ENCODE measurements at regions of chr2 and their contacts with region 1.

Region 1: DNA sequence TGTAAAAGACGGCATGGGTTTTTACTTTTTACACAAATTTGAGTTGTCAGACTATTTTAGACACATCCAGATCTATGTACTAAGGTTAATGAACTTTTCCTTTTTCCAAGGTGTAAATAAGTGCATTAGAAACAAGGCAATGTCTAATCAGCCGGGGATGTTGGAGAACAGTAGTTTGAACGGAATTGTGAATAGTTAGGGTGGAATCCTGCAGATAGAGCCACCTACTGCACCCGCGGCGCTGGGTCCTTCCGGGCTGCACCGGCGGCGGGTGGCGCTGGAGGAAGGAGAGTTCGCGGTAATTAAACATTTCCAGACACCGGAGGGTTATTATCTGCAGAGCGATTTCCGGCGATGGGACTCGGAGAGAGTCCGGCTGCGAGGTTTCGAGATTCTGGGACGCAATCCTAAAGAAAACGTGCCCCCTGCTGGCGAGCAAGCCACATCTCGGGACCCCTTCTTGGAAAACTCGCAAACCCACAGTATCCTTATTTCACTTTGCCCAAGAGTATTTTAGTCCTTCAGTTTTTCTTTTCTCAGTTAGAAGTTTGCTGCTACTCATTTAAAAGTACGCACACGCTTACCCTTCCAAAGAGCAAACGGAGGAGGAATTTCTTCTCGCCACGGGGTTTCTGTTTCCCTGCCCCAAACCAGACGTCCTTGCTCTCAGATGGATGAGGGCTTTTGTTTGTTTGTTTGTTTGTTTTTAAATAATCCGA is 4.5 kb upstream of the OSR1 start:
- DNase-seq: peak; percentile 77 to 84
- H3K4me3 ChIP-seq: peak overlapping the region; percentile 36
- H3K4me3 Mint-ChIP-seq: peak overlapping the region; percentile 82
- H3K27ac Mint-ChIP-seq: no peak overlapping the region
- H3K4me1 ChIP-seq: no peaks in the 10 kb centered on the region; the same call in 1 of the 2 replicates
- H3K4me1 Mint-ChIP-seq: peaks cover 19% of the 10 kb centered on the region
- H3K27me3 ChIP-seq: no peaks in the 10 kb centered on the region
- H3K27me3 Mint-ChIP-seq: peaks cover 15% of the 10 kb centered on the region
- CTCF ChIP-seq: peak; percentile 83 to 85

Region 2: DNA sequence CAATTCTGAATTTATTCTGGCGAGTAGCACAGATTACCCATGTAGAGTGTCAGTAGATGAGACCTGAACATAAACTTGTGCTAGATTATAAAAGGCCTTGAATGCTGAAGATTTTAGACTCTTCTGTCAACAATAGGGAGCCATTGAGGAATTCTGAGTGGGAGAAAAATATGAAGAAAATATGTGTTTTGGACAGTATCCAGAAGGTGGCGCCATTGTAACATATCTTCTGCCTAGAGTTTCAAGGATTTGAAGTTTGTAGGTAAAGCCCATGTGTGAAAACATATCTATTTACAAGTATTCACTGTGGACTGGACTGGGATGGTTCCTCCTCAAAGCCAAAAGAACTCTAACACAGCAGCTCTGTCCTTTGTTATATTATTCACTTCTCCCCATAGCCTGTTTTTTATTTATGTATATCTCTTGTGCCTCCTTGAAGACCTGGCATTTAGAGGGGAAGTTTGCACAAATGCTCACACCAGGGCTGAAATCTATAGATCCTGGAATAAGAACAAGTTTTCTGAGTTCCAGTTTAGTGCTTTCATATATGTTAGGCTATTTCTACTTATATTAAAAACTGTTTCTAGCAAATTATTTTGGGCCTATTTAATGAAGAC is 927.4 kb before region 1 on chr2:
- CTCF ChIA-PET with region 1: no interaction called
- POLR2A ChIA-PET with region 1: no interaction called
- intact Hi-C with region 1: loop called (anchors 5 kb)
- DNase-seq: peak in 1 of 2 experiments; percentile 58
- H3K4me3 ChIP-seq: no peak overlapping the region
- H3K4me3 Mint-ChIP-seq: no peak overlapping the region
- H3K27ac Mint-ChIP-seq: no peak overlapping the region
- H3K4me1 ChIP-seq: no peaks in the 10 kb centered on the region
- H3K4me1 Mint-ChIP-seq: no peaks in the 10 kb centered on the region
- H3K27me3 ChIP-seq: no peaks in the 10 kb centered on the region; the same call in 1 of the 2 replicates
- H3K27me3 Mint-ChIP-seq: peaks cover 14% of the 10 kb centered on the region
- CTCF ChIP-seq: peak; percentile 63 to 66

Region 3: DNA sequence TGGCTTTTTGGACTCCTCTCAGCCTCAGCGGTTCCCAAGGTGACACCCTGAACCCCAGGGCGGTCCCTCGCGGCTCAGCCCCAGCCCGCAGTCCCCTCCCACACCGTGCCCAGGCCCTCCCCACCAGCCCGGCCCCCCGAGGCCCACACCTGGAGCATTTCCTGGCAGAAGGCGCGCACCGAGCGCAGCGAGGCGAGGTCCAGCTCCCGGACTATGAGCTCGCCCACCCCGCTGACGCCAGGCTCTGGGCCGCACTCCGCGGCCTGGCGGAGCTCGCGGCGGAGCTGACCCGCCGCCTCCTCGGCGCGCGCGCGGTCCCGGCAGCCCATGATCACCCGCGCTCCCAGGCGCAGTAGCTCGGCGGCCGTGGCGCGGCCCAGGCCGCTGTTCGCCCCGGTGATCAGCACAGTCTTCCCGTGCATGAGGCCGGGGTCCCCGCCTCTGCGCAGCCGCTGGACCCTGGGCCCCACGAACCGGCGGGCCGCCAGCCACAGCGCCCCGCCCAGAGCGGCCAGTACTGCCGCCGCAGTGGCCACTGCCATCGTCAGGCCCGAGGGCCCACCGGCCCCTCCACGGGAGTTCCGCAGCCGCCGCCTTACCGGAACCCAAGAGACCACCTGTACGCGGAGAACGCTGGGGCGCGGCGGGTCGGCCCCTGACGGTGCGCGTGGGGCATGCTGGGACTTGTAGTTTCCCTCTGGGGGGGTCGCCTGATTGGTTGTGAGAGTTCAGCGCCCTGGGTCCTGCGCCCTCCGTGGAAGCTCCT is 802.7 kb before region 1 on chr2 and contains the start of gene RDH14:
- CTCF ChIA-PET with region 1: no interaction called
- POLR2A ChIA-PET with region 1: no interaction called
- intact Hi-C with region 1: loop called (anchors 5 kb)
- DNase-seq: peak; percentile 95 to 96
- H3K4me3 ChIP-seq: peak within 1 kb of the TSS; percentile 73
- H3K4me3 Mint-ChIP-seq: peak within 1 kb of the TSS; percentile 89
- H3K27ac Mint-ChIP-seq: peak within 1 kb of the TSS; percentile 80
- H3K4me1 ChIP-seq: peaks cover 8% of the 10 kb centered on the region
- H3K4me1 Mint-ChIP-seq: peaks cover 14% of the 10 kb centered on the region
- H3K27me3 ChIP-seq: no peaks in the 10 kb centered on the region
- H3K27me3 Mint-ChIP-seq: no peaks in the 10 kb centered on the region
- CTCF ChIP-seq: no peak
- total RNA-seq, gene RDH14: 16.3 and 17.0 TPM in 2 replicates

Region 4: GRCh38 chr2:18800240-18800971 is 562.5 kb before region 1 on chr2:
- CTCF ChIA-PET with region 1: no interaction called
- POLR2A ChIA-PET with region 1: no interaction called
- intact Hi-C with region 1: loop called (anchors 1 kb)
- DNase-seq: peak; percentile 65 to 69
- H3K4me3 ChIP-seq: no peak overlapping the region
- H3K4me3 Mint-ChIP-seq: no peak overlapping the region
- H3K27ac Mint-ChIP-seq: no peak overlapping the region
- H3K4me1 ChIP-seq: peaks cover 9% of the 10 kb centered on the region
- H3K4me1 Mint-ChIP-seq: no peaks in the 10 kb centered on the region
- H3K27me3 ChIP-seq: peaks cover 1% of the 10 kb centered on the region; the same call in 1 of the 2 replicates
- H3K27me3 Mint-ChIP-seq: peaks cover 16% of the 10 kb centered on the region
- CTCF ChIP-seq: no peak

Region 5: GRCh38 chr2:18883616-18884456 is 479.1 kb before region 1 on chr2:
- CTCF ChIA-PET with region 1: no interaction called
- POLR2A ChIA-PET with region 1: no interaction called
- intact Hi-C with region 1: loop called (anchors 1 kb)
- DNase-seq: peak in 1 of 2 experiments; percentile 16
- H3K4me3 ChIP-seq: no peak overlapping the region
- H3K4me3 Mint-ChIP-seq: no peak overlapping the region
- H3K27ac Mint-ChIP-seq: no peak overlapping the region
- H3K4me1 ChIP-seq: no peaks in the 10 kb centered on the region
- H3K4me1 Mint-ChIP-seq: no peaks in the 10 kb centered on the region
- H3K27me3 ChIP-seq: no peaks in the 10 kb centered on the region
- H3K27me3 Mint-ChIP-seq: no peaks in the 10 kb centered on the region
- CTCF ChIP-seq: peak; percentile 38 to 51

Region 6: GRCh38 chr2:19114754-19115231 is 248.1 kb before region 1 on chr2:
- CTCF ChIA-PET with region 1: interaction called, 3 read pairs
- POLR2A ChIA-PET with region 1: no interaction called
- intact Hi-C with region 1: loop called (anchors 1 kb)
- DNase-seq: no peak
- H3K4me3 ChIP-seq: no peak overlapping the region
- H3K4me3 Mint-ChIP-seq: no peak overlapping the region
- H3K27ac Mint-ChIP-seq: no peak overlapping the region
- H3K4me1 ChIP-seq: no peaks in the 10 kb centered on the region
- H3K4me1 Mint-ChIP-seq: no peaks in the 10 kb centered on the region
- H3K27me3 ChIP-seq: no peaks in the 10 kb centered on the region
- H3K27me3 Mint-ChIP-seq: no peaks in the 10 kb centered on the region
- CTCF ChIP-seq: no peak

Region 7: DNA sequence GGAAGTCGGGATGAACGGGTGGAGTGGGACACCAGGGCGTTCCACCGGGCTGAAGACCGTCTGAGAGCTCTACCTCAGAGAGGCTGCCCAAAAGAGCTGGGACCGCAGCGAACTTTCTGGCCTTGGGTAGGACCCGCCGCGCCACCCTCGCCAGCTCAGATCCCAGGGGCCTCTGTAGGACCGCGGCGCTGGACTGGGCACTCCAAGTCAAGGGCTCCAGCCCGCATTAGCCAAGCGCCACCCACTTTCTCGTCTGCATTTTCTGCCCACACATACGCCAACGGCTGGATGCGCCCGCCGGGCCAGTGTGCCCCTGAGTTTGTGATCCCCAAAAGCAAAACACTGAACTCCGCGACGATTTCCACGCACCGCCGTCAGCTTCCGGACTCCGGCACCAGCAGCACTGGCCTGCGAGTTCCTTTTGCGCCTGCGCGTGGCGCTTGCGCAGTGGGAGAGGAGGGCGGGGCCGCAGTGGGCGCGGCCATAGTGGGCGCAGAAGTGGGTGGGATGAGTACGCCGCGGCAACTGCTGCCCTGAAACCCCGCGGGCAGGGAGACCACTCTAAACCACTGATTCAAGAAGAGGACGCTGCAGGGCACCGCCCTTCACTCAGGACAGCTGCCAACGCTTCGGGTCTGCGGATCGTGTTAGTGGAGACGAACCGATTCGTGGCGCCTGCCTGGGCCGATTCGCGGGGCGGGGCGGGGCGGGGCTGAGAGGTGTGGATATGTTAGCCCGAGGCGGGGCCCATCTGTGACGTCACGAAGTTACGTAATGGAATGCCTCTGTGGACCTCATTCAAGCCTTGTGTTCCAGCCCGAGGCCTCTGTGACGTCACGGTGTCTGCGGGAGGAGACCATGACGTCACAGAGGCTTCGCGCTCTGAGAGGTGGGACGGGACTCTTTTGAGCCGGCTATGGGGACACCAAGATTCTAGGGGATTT is 15.0 kb before region 1 on chr2:
- CTCF ChIA-PET with region 1: interaction called, 5 read pairs
- POLR2A ChIA-PET with region 1: interaction called, 12 read pairs
- intact Hi-C with region 1: no loop called
- DNase-seq: peak; percentile 97 to 98
- H3K4me3 ChIP-seq: peak overlapping the region; percentile 88
- H3K4me3 Mint-ChIP-seq: peak overlapping the region; percentile 98
- H3K27ac Mint-ChIP-seq: peak overlapping the region; percentile 98
- H3K4me1 ChIP-seq: no peaks in the 10 kb centered on the region
- H3K4me1 Mint-ChIP-seq: no peaks in the 10 kb centered on the region
- H3K27me3 ChIP-seq: no peaks in the 10 kb centered on the region
- H3K27me3 Mint-ChIP-seq: no peaks in the 10 kb centered on the region
- CTCF ChIP-seq: no peak